Kidney (tissue), 22 donors: ENCODE measurements at regions of chr3 and their contacts with region 1.

Region 1: DNA sequence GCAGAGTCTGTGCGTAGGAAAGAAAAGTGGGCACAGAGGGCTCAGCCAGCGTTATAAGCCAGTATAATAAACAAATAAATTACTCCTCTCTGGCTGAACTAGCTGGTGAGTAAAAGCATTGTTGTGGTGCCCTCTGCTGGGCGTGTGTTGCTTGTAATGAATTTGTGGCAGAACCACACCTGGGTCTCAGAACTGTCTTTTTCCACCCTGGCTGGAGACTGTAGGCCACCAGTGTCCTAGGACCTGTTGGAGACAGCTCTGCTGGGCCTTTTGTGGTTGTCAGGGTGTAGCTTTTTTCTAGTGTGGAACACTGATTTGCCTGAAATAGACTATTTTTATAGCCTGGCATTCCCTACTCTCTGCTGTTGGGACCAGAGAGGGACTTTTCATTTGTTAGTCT is 130.5 kb upstream of the EIF1B start:
- DNase-seq: peak in 4 of 5 donors; percentile 77 to 89 (median 80)
- H3K4me3 ChIP-seq: no peak overlapping the region
- H3K27ac ChIP-seq: no peak overlapping the region
- H3K4me1 ChIP-seq: peaks cover 0 to 2% (median 0%) of the 10 kb centered on the region in 3 donors
- H3K27me3 ChIP-seq: no peaks in the 10 kb centered on the region
- CTCF ChIP-seq: peak; percentile 76

Region 2: GRCh38 chr3:39707314-39707909 is 471.6 kb before region 1 on chr3:
- intact Hi-C with region 1: loop called (anchors 10 kb)
- DNase-seq: peak in 2 of 5 donors; percentile 29 to 54
- H3K4me3 ChIP-seq: no peak overlapping the region
- H3K27ac ChIP-seq: no peak overlapping the region
- H3K4me1 ChIP-seq: no peaks in the 10 kb centered on the region
- H3K27me3 ChIP-seq: no peaks in the 10 kb centered on the region
- CTCF ChIP-seq: peak; percentile 47